Naive thymus-derived CD8-positive, alpha-beta T cell (primary cell): ENCODE measurements at regions of chr20 and their contacts with region 1.

Region 1: DNA sequence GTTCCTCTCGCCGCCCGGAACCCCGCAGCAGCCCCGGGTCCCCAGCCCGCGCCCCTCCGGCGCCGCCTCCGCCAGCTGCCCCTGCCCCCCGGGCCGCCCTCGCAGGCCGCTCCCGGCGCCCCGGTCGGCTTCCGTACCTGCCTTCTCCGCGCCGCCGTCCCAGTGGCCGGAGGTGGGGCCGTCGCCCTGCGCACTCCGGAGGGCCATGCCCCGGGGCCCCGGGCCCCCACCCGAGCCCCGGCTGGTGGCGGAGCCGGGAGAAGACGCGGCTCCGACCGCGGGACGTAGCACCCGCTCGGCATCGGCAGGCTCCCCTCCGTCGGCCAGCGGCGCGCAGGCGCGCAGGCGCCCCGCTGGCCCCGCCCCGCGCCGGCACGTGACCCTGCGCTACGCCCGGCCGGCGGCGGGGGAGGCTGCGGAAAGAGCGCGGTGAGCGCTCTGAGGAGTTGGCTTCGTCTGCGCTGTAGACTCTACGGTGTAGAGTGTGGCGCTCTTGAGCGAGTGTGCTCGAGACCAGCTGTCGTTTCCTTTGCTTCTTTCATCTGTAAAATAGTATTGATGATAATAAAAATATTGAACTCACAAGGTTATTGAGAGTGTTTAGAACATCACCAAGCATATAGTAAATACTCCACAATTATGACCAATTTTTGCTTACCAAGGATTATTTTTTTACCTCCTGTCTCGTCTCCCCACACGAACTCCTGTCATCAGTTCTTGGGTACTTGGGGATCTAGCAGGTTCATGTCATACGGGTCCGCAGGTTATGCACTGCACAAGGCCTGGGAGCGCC is at the start of gene TBC1D20:
- DNase-seq: peak; percentile 78 to 91 (median 86)
- ATAC-seq: peak; percentile 95 to 97
- H3K4me3 Mint-ChIP-seq: peak within 1 kb of the TSS; percentile 88 to 98 (median 97)
- H3K27ac Mint-ChIP-seq: peak within 1 kb of the TSS; percentile 85 to 96 (median 94)
- H3K4me1 Mint-ChIP-seq: peaks cover 11 to 47% (median 43%) of the 10 kb centered on the region in 4 donors
- H3K27me3 Mint-ChIP-seq: peaks cover 0 to 5% (median 2%) of the 10 kb centered on the region in 5 donors
- polyA plus RNA-seq, gene TBC1D20: 13.8 to 20.8 (median 19.0) TPM

Region 2: DNA sequence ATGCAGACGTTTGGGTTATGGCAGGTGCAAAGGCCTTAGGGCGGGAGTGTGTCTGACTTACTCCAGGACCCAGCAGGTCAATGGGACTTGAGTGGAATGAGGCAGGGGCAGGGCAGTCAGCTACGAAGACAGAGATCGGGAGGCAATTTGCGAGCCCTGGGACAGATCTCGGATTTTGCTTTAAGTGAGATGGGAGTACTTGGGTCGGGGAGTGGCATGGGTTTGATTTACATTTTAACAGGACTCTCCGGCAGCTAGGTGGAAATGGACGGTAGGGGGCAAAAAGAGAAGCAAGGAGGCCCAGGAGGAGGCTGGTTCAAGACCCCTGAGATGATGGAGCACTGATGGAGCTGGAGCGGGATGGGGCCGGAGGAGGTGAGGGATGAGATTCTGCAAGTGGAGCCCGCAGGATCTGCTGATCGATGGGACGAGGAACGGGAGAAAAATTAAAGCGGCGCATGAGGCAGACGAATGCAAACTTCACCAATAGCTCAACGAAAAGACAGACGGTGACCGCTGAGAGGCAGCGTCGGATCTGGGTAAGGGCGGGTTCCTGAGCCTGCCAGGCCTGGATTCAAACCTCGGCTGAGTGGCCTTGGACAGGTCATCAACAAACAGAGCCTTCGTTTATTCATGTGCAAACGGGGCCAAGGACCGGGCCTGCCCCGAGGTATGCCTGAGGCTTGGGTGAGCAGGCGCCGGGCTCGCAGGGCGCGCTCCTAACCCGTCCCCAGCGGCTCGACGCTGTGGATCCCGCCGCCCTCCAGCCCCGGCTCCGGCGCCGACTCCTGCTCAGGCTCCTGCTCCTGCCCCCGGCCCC is 55.1 kb before region 1 on chr20:
- POLR2A ChIA-PET with region 1: interaction called, 13 read pairs
- DNase-seq: peak; percentile 35 to 76 (median 52)
- ATAC-seq: peak; percentile 74 to 76
- H3K4me3 Mint-ChIP-seq: peak overlapping the region; percentile 79 to 97 (median 92)
- H3K27ac Mint-ChIP-seq: peak overlapping the region; percentile 91 to 97 (median 94)
- H3K4me1 Mint-ChIP-seq: peaks cover 24 to 51% (median 46%) of the 10 kb centered on the region in 4 donors
- H3K27me3 Mint-ChIP-seq: no peaks in the 10 kb centered on the region

Region 3: DNA sequence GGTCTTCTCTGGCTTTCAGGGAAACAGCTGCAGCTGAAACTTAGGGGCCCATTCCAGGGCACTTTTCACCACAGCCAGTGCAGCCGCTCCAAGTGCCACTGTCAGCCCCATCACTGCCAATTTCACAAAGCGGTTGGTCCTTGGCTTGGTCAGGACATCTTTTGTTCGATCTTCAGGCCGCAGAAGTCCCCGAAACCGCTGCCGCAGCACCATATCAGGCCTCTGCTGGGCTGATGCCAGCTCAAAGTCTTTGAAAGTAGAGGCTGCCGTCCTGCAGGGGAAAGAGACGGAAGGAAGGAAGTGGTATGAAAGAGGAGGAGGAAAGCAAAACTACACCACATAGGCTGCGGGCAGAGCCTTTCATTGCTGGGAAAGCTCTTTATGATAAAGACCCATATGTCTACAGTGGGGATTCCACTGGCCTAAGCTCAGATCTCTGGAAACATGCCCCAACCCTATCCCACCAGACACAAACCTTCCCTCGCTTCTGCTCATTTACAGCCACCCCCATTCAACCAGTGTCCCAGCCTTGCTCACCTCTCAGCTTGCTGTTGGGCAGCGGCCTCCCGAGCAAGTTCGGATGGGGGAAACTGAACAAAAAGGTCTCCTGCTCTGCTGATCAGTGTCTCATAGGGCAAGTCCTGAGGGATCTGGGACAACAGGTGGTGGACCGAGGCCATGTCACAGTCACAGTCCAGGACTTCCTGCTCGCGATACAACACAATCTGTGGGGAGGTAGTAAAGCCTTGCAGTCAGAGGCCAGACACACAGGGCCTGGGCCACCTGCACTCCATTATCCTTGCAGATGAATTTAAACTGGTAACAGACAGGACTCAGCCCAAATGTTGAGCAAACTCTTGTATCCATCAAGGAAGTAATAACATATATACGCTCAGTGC is 23.6 kb before region 1 on chr20:
- POLR2A ChIA-PET with region 1: interaction called, 13 read pairs
- DNase-seq: peak in 9 of 10 donors; percentile 40 to 79 (median 62)
- ATAC-seq: peak; percentile 91 to 93
- H3K4me3 Mint-ChIP-seq: peak overlapping the region; percentile 66 to 90 (median 80)
- H3K27ac Mint-ChIP-seq: peak overlapping the region; percentile 21 to 87 (median 64)
- H3K4me1 Mint-ChIP-seq: peaks cover 31 to 57% (median 56%) of the 10 kb centered on the region in 4 donors
- H3K27me3 Mint-ChIP-seq: no peaks in the 10 kb centered on the region